ENCODE measurements at regions of chr13 and their contacts with region 1.

Region 1: DNA sequence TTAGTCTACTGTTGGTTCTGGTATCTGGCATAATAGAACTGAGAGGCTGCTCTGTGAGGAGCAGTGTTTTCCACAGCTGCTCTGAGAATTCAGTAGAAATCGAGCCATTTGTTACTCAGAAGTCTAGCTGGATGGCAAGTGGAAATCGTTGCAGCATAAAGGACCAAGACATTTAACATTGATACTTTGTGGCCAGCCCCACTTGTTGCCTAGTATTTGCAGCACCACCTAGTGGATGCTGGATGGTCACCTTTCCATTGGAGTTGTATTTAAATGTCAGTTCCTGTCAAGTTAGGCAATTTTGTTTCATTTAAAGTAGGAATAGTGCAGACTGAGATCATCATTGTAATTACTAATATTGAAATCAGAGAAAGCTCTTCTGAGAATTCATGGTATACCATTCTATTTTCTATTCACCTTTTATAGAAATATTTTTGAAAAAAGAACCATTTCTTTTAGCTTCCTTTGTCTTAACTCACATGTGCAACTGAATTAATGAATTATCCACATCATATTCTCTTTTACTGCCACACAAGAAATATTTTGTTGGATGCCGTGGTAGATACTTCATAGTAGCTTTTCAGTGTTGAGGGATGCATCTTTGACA is 64.6 kb downstream of the PDS5B start:
- DNase-seq: no peak
- ATAC-seq: peak; percentile 85
- H3K4me3 Mint-ChIP-seq: no peak overlapping the region
- H3K27ac Mint-ChIP-seq: no peak overlapping the region
- H3K4me1 Mint-ChIP-seq: peaks cover 54% of the 10 kb centered on the region
- H3K27me3 Mint-ChIP-seq: no peaks in the 10 kb centered on the region
- CTCF ChIP-seq: peak; percentile 78

Region 2: DNA sequence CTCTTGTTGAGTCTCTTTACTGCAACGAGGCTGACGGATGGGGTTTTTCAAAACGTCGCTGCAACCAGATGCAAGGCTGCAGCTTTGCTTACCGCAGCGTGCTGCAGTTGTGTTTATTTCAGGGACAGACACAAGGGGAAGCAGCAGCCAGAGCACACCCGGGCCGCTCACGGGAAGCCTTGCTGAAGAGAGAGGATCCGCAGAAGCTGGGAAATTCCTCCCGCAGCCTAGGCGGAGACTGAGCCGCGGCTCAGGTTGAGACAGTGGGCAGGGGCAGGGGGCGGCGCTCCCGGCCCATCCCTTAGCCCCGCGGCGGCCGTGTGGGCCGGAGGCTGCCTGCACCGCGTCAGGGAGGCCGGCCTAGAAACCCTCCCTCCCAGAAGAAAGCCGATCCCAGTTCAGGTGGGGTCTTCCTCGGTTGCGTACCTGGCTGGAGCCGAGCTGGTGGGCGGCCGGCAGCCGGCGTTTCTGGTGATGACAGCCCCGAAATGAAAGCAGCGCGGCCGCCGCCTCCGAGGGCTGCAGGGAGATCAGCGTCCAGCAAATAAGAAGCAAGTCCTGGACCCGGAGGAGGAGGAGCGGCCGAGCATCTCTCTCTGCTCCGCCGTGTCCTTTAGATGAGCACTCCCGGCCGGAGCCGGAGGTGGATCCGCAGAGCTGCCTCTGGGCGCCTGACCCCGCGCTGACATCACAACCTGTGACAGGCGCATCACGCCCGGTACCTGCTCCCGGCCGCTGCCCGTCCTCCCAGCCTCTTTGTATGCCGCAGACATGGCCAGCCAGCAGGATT is 619.6 kb before region 1 on chr13 and contains the start of gene FRY:
- CTCF ChIA-PET with region 1: no interaction called
- POLR2A ChIA-PET with region 1: no interaction called
- intact Hi-C with region 1: loop called (anchors 10 kb)
- DNase-seq: peak; percentile 42
- ATAC-seq: peak; percentile 75
- H3K4me3 Mint-ChIP-seq: peak within 1 kb of the TSS; percentile 94
- H3K27ac Mint-ChIP-seq: peak within 1 kb of the TSS; percentile 61
- H3K4me1 Mint-ChIP-seq: peaks cover 26% of the 10 kb centered on the region
- H3K27me3 Mint-ChIP-seq: peaks cover 7% of the 10 kb centered on the region
- CTCF ChIP-seq: no peak
- total RNA-seq, gene FRY: 4.7 and 4.8 TPM in 2 replicates

Region 3: GRCh38 chr13:32632343-32632909 is 18.4 kb before region 1 on chr13:
- CTCF ChIA-PET with region 1: interaction called, 7 read pairs
- POLR2A ChIA-PET with region 1: no interaction called
- intact Hi-C with region 1: loop called (anchors 2 kb)
- DNase-seq: no peak
- ATAC-seq: no peak
- H3K4me3 Mint-ChIP-seq: no peak overlapping the region
- H3K27ac Mint-ChIP-seq: no peak overlapping the region
- H3K4me1 Mint-ChIP-seq: peaks cover 29% of the 10 kb centered on the region
- H3K27me3 Mint-ChIP-seq: no peaks in the 10 kb centered on the region
- CTCF ChIP-seq: no peak

Region 4: GRCh38 chr13:32639502-32640105 is 11.2 kb before region 1 on chr13:
- CTCF ChIA-PET with region 1: interaction called, 24 read pairs
- POLR2A ChIA-PET with region 1: no interaction called
- intact Hi-C with region 1: loop called (anchors 1 kb)
- DNase-seq: no peak
- ATAC-seq: peak; percentile 79
- H3K4me3 Mint-ChIP-seq: no peak overlapping the region
- H3K27ac Mint-ChIP-seq: no peak overlapping the region
- H3K4me1 Mint-ChIP-seq: peaks cover 42% of the 10 kb centered on the region
- H3K27me3 Mint-ChIP-seq: no peaks in the 10 kb centered on the region
- CTCF ChIP-seq: no peak

Region 5: GRCh38 chr13:32663660-32664059 is 12.9 kb after region 1 on chr13:
- CTCF ChIA-PET with region 1: interaction called, 18 read pairs
- POLR2A ChIA-PET with region 1: no interaction called
- intact Hi-C with region 1: no loop called
- DNase-seq: no peak
- ATAC-seq: no peak
- H3K4me3 Mint-ChIP-seq: no peak overlapping the region
- H3K27ac Mint-ChIP-seq: no peak overlapping the region
- H3K4me1 Mint-ChIP-seq: no peaks in the 10 kb centered on the region
- H3K27me3 Mint-ChIP-seq: no peaks in the 10 kb centered on the region
- CTCF ChIP-seq: no peak

Region 6: DNA sequence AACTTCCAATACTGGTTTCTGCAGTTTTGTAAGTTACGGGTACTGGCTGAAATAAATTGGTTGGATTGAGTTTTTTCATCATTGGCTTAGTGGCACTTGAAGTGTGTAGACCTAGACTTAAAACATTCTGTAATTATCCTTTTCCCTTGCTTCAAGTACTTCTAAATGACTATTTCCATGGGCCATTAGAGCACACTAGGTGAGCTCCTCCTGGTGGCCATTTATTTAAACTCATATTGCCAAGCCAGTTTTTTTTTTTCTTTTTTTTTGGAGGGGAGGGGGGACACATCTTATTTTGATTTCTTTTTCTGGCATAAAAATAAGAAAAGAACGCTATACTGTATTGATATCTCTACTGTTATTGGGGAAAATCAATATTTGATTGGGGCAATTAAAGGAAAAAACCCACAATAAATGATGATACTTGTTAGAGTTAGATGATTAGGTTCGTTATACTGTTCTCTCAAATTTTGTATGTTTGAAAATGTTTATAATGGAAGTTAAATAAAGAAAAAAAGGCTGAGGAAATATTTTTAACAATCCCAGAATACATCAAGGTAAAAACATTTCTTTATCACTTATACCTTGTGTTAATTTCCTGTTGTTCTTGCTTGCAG is 18.3 kb after region 1 on chr13:
- CTCF ChIA-PET with region 1: interaction called, 18 read pairs
- POLR2A ChIA-PET with region 1: no interaction called
- intact Hi-C with region 1: no loop called
- DNase-seq: no peak
- ATAC-seq: no peak
- H3K4me3 Mint-ChIP-seq: no peak overlapping the region
- H3K27ac Mint-ChIP-seq: no peak overlapping the region
- H3K4me1 Mint-ChIP-seq: peaks cover 3% of the 10 kb centered on the region
- H3K27me3 Mint-ChIP-seq: no peaks in the 10 kb centered on the region
- CTCF ChIP-seq: no peak

Region 7: GRCh38 chr13:33723772-33724435 is 1073.1 kb after region 1 on chr13:
- CTCF ChIA-PET with region 1: no interaction called
- POLR2A ChIA-PET with region 1: no interaction called
- intact Hi-C with region 1: loop called (anchors 5 kb)
- DNase-seq: no peak
- ATAC-seq: peak; percentile 72
- H3K4me3 Mint-ChIP-seq: no peak overlapping the region
- H3K27ac Mint-ChIP-seq: no peak overlapping the region
- H3K4me1 Mint-ChIP-seq: peaks cover 21% of the 10 kb centered on the region
- H3K27me3 Mint-ChIP-seq: peaks cover 21% of the 10 kb centered on the region
- CTCF ChIP-seq: no peak